ENCODE measurements at regions of chr16 and their contacts with region 1.

Region 1: GRCh38 chr16:11036040-11036439 is 91.7 kb downstream of the CLEC16A start:
- DNase-seq: no peak
- ATAC-seq: no peak
- H3K4me3 ChIP-seq: no peak overlapping the region
- H3K27ac ChIP-seq: no peak overlapping the region
- H3K4me1 ChIP-seq: peaks cover 40% of the 10 kb centered on the region
- H3K27me3 ChIP-seq: no peaks in the 10 kb centered on the region
- CTCF ChIP-seq: no peak

Region 2: DNA sequence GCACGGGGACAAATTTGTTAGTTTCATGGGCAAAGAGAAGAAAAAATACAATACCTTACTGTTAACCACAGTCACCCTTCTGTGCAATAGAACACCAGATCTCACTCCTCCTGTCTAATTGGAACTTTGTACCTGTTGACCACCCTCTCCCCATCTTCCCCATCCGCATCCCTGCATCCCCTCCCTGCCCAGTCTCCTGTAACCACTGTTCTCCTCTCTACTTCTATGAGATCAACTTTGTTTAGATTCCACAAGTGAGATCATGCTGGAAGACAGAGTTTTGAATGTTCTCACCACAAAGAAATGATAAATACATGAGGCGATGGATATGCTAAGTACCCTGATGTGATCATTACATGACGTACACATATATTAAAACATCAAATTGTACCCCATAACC is 43.9 kb before region 1 on chr16:
- CTCF ChIA-PET with region 1: interaction called, 13 read pairs
- POLR2A ChIA-PET with region 1: no interaction called
- intact Hi-C with region 1: no loop called
- DNase-seq: no peak
- ATAC-seq: no peak
- H3K4me3 ChIP-seq: no peak overlapping the region
- H3K27ac ChIP-seq: peak overlapping the region; percentile 92
- H3K4me1 ChIP-seq: peaks cover 33% of the 10 kb centered on the region
- H3K27me3 ChIP-seq: no peaks in the 10 kb centered on the region
- CTCF ChIP-seq: no peak

Measured in PC-3 (cell line).